Activated naive CD4-positive, alpha-beta T cell treated with anti-CD3 and anti-CD28 coated beads, Interleukin-2, amount 10 ng/mL, durations not matched to agents 7 days and 5 days (primary cell): ENCODE measurements at regions of chr17 and their contacts with region 1.

Region 1: GRCh38 chr17:8222630-8223356 is 12.4 kb upstream of the AURKB start:
- DNase-seq: peak; percentile 93
- H3K4me3 Mint-ChIP-seq: peak overlapping the region; percentile 96
- H3K27ac Mint-ChIP-seq: peak overlapping the region; percentile 100
- H3K4me1 Mint-ChIP-seq: peaks cover 69% of the 10 kb centered on the region
- H3K27me3 Mint-ChIP-seq: peaks cover 15% of the 10 kb centered on the region

Region 2: GRCh38 chr17:8189711-8190477 is 32.9 kb before region 1 on chr17 and contains the start of gene BORCS6:
- CTCF ChIA-PET with region 1: interaction called, 10 read pairs
- DNase-seq: peak; percentile 98
- H3K4me3 Mint-ChIP-seq: peak within 1 kb of the TSS; percentile 25
- H3K27ac Mint-ChIP-seq: no peak within 1 kb of the TSS
- H3K4me1 Mint-ChIP-seq: peaks cover 12% of the 10 kb centered on the region
- H3K27me3 Mint-ChIP-seq: no peaks in the 10 kb centered on the region

Region 3: GRCh38 chr17:8248751-8249607 is 26.2 kb after region 1 on chr17 and contains the start of gene PFAS:
- CTCF ChIA-PET with region 1: interaction called, 38 read pairs
- DNase-seq: peak; percentile 97
- H3K4me3 Mint-ChIP-seq: peak within 1 kb of the TSS; percentile 88
- H3K27ac Mint-ChIP-seq: peak within 1 kb of the TSS; percentile 100
- H3K4me1 Mint-ChIP-seq: peaks cover 48% of the 10 kb centered on the region
- H3K27me3 Mint-ChIP-seq: no peaks in the 10 kb centered on the region

Region 4: GRCh38 chr17:8275421-8276290 is 52.9 kb after region 1 on chr17:
- CTCF ChIA-PET with region 1: no interaction called
- DNase-seq: no peak
- H3K4me3 Mint-ChIP-seq: no peak overlapping the region
- H3K27ac Mint-ChIP-seq: no peak overlapping the region
- H3K4me1 Mint-ChIP-seq: no peaks in the 10 kb centered on the region
- H3K27me3 Mint-ChIP-seq: no peaks in the 10 kb centered on the region